ENCODE measurements at regions of chr5 and their contacts with region 1.

Region 1: GRCh38 chr5:178279725-178280438 is 47.3 kb upstream of the PHYKPL start:
- DNase-seq: peak; percentile 91
- H3K4me3 ChIP-seq: no peak overlapping the region
- H3K27ac ChIP-seq: no peak overlapping the region
- H3K4me1 ChIP-seq: no peaks in the 10 kb centered on the region
- H3K27me3 ChIP-seq: no peaks in the 10 kb centered on the region
- CTCF ChIP-seq: peak; percentile 73 to 83 (median 82)
- POLR2A ChIP-seq: no peak

Region 2: DNA sequence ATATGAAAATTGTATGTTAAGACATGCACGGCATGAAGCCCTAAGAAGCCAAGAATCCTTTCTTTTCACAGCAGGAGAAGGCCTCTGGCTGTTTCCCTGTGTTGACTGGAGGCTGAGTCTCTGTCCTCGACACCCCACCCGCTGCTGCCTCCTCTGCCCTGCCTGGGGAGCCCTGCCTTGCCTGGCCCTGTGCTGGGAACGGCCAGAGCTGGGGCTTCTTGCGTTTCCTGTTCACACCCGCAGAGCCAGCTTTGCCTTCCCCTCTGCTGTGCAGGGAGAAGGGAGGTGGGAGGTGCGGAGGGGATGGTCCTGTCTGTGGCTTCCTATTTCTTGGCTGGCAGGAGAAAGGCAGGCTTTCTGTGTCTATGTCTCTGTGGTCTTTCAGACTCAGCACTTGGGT is 85.9 kb before region 1 on chr5:
- intact Hi-C with region 1: no loop called
- DNase-seq: no peak
- H3K4me3 ChIP-seq: no peak overlapping the region
- H3K27ac ChIP-seq: no peak overlapping the region
- H3K4me1 ChIP-seq: no peaks in the 10 kb centered on the region
- H3K27me3 ChIP-seq: no peaks in the 10 kb centered on the region
- CTCF ChIP-seq: no peak
- POLR2A ChIP-seq: no peak

Region 3: GRCh38 chr5:178551059-178551458 is 271.2 kb after region 1 on chr5:
- intact Hi-C with region 1: loop called (anchors 10 kb)
- DNase-seq: no peak
- H3K4me3 ChIP-seq: no peak overlapping the region
- H3K27ac ChIP-seq: no peak overlapping the region
- H3K4me1 ChIP-seq: no peaks in the 10 kb centered on the region
- H3K27me3 ChIP-seq: no peaks in the 10 kb centered on the region
- CTCF ChIP-seq: peak; percentile 9 to 62 (median 23)
- POLR2A ChIP-seq: no peak

Region 4: GRCh38 chr5:178589180-178590140 is 309.6 kb after region 1 on chr5:
- intact Hi-C with region 1: loop called (anchors 10 kb)
- DNase-seq: peak; percentile 63
- H3K4me3 ChIP-seq: peak overlapping the region; percentile 35 to 41
- H3K27ac ChIP-seq: no peak overlapping the region
- H3K4me1 ChIP-seq: peaks cover 5% of the 10 kb centered on the region
- H3K27me3 ChIP-seq: no peaks in the 10 kb centered on the region
- CTCF ChIP-seq: peak in 1 of 3 experiments; percentile 25
- POLR2A ChIP-seq: no peak